ENCODE measurements at regions of chr16 and their contacts with region 1.

Region 1: DNA sequence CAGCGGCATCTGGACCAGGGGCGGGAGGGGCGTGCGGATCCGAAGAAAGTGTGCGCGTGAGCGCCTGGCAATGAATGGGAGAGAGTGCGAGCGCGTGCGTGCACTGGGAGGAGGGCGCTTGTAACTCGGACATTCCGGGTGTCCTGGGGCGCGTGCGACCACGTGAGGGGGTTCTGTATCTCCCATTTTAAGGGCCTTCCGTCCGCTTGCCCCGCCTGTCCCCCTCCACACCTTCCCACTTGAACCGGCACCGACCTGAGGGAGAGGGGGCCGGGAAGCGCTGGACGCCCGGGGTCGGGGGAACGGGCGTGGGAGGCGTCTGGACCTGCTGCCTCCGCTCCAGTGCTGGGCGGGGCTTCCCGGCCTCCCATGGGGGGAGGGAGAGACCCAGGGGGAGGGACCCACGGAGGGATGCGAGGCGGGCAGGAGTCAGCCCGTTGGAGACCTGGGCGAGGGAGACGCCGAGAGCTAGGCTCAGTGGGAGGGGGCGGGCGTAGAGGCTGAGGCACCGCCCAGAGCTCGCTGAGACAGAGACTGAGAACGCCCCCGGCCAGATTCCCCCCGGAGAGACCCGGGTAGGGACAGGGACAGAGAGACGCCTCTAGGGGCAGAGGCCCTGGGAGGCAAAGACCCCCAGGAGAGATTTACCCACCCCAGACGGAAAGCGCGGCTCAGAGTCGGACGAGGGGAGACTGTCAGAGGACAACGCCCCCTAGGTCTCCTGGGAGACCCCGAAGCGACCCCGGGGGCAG is at the start of gene KREMEN2:
- DNase-seq: no peak
- H3K4me3 ChIP-seq: peak within 1 kb of the TSS in 6 of 7 experiments; percentile 42 to 66 (median 54)
- H3K27ac ChIP-seq: no peak within 1 kb of the TSS
- H3K4me1 ChIP-seq: peaks cover 0 to 59% (median 44%) of the 10 kb centered on the region in 4 experiments
- H3K27me3 ChIP-seq: peaks cover 0 to 71% (median 31%) of the 10 kb centered on the region in 5 experiments

Region 2: GRCh38 chr16:2980227-2981086 is 16.6 kb after region 1 on chr16 and contains the start of gene PKMYT1:
- CTCF ChIA-PET with region 1: interaction called, 10 read pairs
- POLR2A ChIA-PET with region 1: no interaction called
- DNase-seq: peak; percentile 81 to 91 (median 88)
- H3K4me3 ChIP-seq: peak within 1 kb of the TSS; percentile 34 to 95 (median 88)
- H3K27ac ChIP-seq: peak within 1 kb of the TSS; percentile 74 to 89
- H3K4me1 ChIP-seq: peaks cover 0 to 37% (median 22%) of the 10 kb centered on the region in 4 experiments
- H3K27me3 ChIP-seq: no peaks in the 10 kb centered on the region

Measured in common myeloid progenitor, CD34-positive (primary cell).